ENCODE measurements at regions of chr13 and their contacts with region 1.

Region 1: DNA sequence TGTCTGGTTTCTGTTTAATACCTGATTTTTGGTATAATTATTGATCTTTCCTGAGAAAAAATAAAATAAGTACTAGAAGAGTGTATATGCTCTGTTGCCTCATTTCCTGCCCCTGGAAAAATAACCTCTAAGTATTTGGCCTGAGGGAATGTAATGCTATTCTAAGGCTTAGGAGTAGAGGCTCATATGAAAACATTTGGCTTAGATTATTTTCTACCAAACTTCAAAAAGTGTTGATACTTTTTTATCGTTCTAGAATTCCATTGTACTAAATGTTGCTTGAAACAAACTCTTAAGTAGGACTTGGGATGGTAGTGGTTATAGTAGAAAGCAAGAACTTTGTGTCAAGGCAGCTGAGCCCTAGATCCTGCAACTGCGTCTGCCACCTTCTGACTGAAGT is 57.8 kb downstream of the COG3 start:
- DNase-seq: no peak
- ATAC-seq: no peak
- H3K4me3 ChIP-seq: no peak overlapping the region
- H3K27ac ChIP-seq: no peak overlapping the region
- H3K4me1 ChIP-seq: peaks cover 56% of the 10 kb centered on the region
- H3K27me3 ChIP-seq: no peaks in the 10 kb centered on the region
- CTCF ChIP-seq: no peak

Region 2: GRCh38 chr13:45301243-45301642 is 221.3 kb before region 1 on chr13:
- CTCF ChIA-PET with region 1: no interaction called
- POLR2A ChIA-PET with region 1: interaction called, 24 read pairs
- intact Hi-C with region 1: no loop called
- DNase-seq: no peak
- ATAC-seq: peak; percentile 30; the same call in 1 of the 2 replicates
- H3K4me3 ChIP-seq: no peak overlapping the region
- H3K27ac ChIP-seq: no peak overlapping the region
- H3K4me1 ChIP-seq: no peaks in the 10 kb centered on the region
- H3K27me3 ChIP-seq: no peaks in the 10 kb centered on the region
- CTCF ChIP-seq: no peak

Measured in PC-3 (cell line).